ENCODE measurements at regions of chr10 and their contacts with region 1.

Region 1: DNA sequence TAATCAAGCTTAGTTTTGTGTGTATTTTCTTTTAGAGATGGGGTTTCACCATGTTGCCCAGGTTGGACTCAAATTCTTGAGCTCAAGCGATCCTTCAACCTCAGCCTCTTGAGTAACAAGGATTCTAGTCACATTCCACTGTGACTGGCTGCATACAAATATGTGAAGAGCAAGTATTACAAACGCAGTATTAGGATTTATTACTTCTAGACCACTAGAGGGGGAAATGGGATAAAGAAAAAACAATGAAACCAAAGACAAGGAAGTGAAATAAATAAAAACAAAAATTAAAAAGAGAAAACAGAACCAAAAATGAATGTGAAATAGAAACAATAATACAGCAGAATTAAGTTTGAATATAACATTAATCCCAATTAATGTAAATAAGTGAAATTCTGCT is 308.7 kb downstream of the ANKRD30A start:
- DNase-seq: no peak
- ATAC-seq: no peak
- H3K4me3 ChIP-seq: no peak overlapping the region
- H3K27ac ChIP-seq: no peak overlapping the region
- H3K4me1 ChIP-seq: no peaks in the 10 kb centered on the region
- H3K27me3 ChIP-seq: no peaks in the 10 kb centered on the region

Region 2: DNA sequence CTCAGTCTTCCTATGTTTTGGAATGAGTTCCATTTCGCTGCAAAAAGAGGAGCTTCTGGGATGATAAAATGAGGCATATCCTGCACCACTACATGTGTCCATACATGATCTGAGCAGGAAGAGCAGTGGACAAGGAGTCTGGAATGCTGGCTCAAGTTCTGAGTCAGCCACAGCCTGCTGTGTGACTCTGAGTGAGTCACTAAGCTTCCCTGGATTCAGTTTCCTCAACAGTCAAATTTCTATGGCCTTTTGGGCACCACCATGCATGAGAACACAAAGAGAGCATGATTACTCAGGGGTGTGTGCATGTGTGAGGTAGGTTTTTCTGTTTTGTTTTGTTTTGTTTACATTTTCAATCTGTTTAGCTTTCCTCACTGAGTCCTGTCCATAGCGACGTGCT is 54.1 kb before region 1 on chr10:
- intact Hi-C with region 1: no loop called
- DNase-seq: no peak
- ATAC-seq: no peak
- H3K4me3 ChIP-seq: no peak overlapping the region
- H3K27ac ChIP-seq: no peak overlapping the region
- H3K4me1 ChIP-seq: no peaks in the 10 kb centered on the region
- H3K27me3 ChIP-seq: no peaks in the 10 kb centered on the region

Region 3: DNA sequence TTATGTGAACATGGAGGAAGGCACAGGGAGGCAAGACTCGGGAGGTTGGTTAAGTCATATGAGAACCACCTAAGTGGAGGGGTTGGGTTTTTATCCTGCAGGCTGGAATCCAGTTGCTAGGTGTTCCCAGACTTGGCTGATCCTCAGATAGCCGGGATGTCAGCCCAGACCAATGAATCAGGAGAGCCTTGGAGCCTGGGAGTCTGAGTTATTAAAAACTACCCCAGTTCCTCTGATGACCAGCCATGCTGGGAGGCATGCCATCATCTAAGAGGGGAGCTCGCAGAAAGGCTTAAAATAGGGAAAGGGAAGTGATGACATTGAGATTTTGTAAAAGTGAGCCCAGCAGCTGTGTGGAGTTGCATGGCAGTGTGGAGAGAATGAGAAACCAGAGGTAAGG is 185.2 kb after region 1 on chr10:
- intact Hi-C with region 1: no loop called
- DNase-seq: peak in 1 of 3 donors; percentile 50
- ATAC-seq: peak; percentile 78 to 80
- H3K4me3 ChIP-seq: no peak overlapping the region
- H3K27ac ChIP-seq: peak overlapping the region; percentile 42
- H3K4me1 ChIP-seq: no peaks in the 10 kb centered on the region
- H3K27me3 ChIP-seq: no peaks in the 10 kb centered on the region

Region 4: GRCh38 chr10:37747081-37747480 is 313.0 kb after region 1 on chr10:
- intact Hi-C with region 1: loop called in 3 of 4 experiments (anchors 5 to 10 kb)
- DNase-seq: no peak
- ATAC-seq: no peak
- H3K4me3 ChIP-seq: no peak overlapping the region
- H3K27ac ChIP-seq: no peak overlapping the region
- H3K4me1 ChIP-seq: no peaks in the 10 kb centered on the region
- H3K27me3 ChIP-seq: no peaks in the 10 kb centered on the region

Region 5: DNA sequence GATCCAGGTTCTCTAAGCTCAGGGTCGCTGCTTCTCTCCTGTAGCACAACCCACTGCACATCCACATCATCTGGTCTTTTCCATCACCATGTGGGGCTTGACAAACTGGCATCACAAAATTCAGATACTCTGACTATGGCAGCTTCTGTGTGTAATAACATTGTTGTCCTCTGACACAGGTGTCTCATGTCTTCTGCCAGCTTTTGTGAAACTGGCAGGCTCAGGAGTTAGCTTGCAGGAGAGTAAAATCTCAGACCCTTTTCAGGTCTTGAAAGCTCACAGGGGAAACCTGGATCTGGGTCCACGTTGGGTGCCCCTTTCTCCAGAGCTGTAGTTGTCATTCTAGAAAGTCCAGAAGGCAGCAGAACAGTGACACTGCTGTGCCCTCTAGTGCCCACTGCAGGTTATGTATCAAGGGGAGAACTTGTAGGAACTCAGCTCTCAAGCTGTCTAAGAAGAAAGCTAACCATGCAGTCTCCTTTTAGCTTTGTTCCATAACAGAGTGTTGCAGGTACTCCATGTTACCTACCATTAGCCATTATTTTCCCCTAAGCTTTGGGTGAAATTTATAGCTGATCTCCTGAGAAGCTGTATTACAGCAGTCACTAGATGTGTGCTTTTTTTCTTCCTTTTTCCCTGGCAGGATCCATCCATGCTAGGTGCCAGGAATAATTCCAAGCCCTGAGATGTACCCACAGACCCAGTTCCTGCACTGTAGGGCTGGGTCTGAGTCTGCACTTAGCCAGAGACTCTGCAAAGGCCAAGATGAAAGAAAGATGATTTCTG is 320.6 kb after region 1 on chr10:
- intact Hi-C with region 1: loop called in 3 of 4 experiments (anchors 5 to 10 kb)
- DNase-seq: peak in 1 of 3 donors; percentile 52
- ATAC-seq: peak; percentile 55 to 76
- H3K4me3 ChIP-seq: no peak overlapping the region
- H3K27ac ChIP-seq: no peak overlapping the region
- H3K4me1 ChIP-seq: no peaks in the 10 kb centered on the region
- H3K27me3 ChIP-seq: no peaks in the 10 kb centered on the region